Adrenal gland (tissue), 19 donors: ENCODE measurements at regions of chr7 and their contacts with region 1.

Region 1: GRCh38 chr7:74544706-74545469 is 91.2 kb downstream of the GTF2IRD1 start:
- DNase-seq: peak in 1 of 7 donors; percentile 24
- H3K4me3 ChIP-seq: no peak overlapping the region
- H3K27ac ChIP-seq: peak overlapping the region in 1 of 5 donors; percentile 69
- H3K4me1 ChIP-seq: no peaks in the 10 kb centered on the region
- H3K27me3 ChIP-seq: no peaks in the 10 kb centered on the region
- CTCF ChIP-seq: peak in 5 of 6 experiments; percentile 24 to 51 (median 45)
- POLR2A ChIP-seq: no peak

Region 2: DNA sequence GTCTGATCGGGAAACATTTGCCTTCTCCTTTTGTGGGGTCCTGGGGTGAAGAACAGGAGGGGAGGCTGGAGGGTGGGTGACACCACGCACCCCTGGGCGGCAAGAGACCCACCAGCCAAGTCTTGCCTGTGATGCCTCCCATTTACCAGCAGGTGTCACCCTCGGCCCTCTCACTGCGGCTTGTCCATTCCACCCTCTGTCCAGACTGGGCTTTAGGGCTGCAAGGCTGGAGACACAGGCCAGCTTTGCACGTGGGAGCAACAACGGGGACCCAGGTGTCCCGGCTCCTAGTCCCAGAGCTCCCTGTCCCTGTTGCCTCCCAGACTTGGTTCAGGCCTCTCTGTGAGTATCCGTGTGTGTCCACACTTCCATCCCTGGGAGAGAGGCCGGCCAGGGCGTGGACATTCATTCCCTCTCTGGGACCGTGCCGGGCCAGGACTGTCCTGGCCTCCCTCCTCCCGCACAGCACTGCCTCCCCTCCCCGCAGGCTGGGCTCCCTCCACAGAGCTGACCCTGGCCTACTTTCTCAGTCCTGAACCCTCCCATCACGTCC is 127.4 kb before region 1 on chr7:
- intact Hi-C with region 1: loop called in 1 of 2 experiments (anchors 5 kb)
- DNase-seq: peak; percentile 65 to 85 (median 74)
- H3K4me3 ChIP-seq: no peak overlapping the region
- H3K27ac ChIP-seq: no peak overlapping the region
- H3K4me1 ChIP-seq: peaks cover 3 to 4% of the 10 kb centered on the region in 2 donors
- H3K27me3 ChIP-seq: no peaks in the 10 kb centered on the region
- CTCF ChIP-seq: peak; percentile 94 to 99 (median 97)
- POLR2A ChIP-seq: no peak

Region 3: GRCh38 chr7:74502181-74502891 is 42.6 kb before region 1 on chr7:
- intact Hi-C with region 1: no loop called
- DNase-seq: peak; percentile 76 to 88 (median 83)
- H3K4me3 ChIP-seq: no peak overlapping the region
- H3K27ac ChIP-seq: peak overlapping the region; percentile 32 to 71 (median 60)
- H3K4me1 ChIP-seq: peaks cover 24 to 31% of the 10 kb centered on the region in 2 donors
- H3K27me3 ChIP-seq: no peaks in the 10 kb centered on the region
- CTCF ChIP-seq: no peak
- POLR2A ChIP-seq: no peak

Region 4: DNA sequence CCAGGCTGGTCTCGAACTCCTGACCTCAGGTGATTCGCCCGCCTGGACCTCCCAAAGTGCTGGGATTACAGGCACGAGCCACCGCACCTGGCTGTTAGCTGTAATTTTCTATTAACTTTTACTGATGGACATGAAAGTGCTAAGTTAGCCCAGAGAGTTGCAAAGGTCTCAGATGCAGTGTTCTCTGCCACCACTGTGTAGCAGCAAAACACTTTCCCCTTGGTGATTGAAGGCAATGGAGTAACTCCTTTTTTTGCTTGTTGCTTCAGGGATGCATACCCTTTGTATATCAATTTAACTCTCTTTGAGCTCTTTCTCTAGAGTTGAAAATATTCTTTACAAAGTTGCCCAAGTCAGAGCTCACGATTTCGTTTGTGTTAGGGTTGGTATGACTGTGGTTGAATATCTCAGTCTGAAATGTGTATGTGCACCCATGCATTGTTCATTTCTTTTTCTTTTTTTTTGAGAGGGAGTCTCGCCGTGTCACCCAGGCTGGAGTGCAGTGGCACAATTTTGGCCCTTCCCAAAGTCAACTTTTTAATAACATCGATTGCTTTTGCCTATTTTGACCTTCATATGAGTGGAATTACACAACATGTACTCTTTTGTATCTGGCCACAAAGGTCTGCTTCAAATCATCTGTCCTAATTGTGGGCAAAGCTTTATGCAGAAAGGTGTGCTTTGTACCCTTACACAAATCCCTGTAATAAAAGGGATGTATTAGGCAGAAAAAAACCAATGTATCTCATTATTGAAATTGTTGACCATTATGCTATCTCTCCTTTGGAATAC is 165.2 kb after region 1 on chr7:
- intact Hi-C with region 1: no loop called
- DNase-seq: no peak
- H3K4me3 ChIP-seq: no peak overlapping the region
- H3K27ac ChIP-seq: peak overlapping the region in 1 of 5 donors; percentile 4
- H3K4me1 ChIP-seq: no peaks in the 10 kb centered on the region
- H3K27me3 ChIP-seq: no peaks in the 10 kb centered on the region
- CTCF ChIP-seq: peak in 1 of 6 experiments; percentile 14
- POLR2A ChIP-seq: no peak